GM12878 (cell line): ENCODE measurements at regions of chr4 and their contacts with region 1.

Region 1: GRCh38 chr4:76543378-76543777 is 108.3 kb downstream of the SHROOM3 start:
- DNase-seq: no peak
- ATAC-seq: no peak
- H3K4me3 ChIP-seq: no peak overlapping the region
- H3K27ac ChIP-seq: no peak overlapping the region
- H3K4me1 ChIP-seq: no peaks in the 10 kb centered on the region; the same call in 1 of the 2 replicates
- H3K27me3 ChIP-seq: peaks cover 0 to 2% of the 10 kb centered on the region in 2 experiments; a peak in 1 of 4 replicates
- CTCF ChIP-seq: no peak
- EP300 ChIP-seq: no peak
- POLR2A ChIP-seq: no peak
- RAD21 ChIP-seq: no peak

Region 2: DNA sequence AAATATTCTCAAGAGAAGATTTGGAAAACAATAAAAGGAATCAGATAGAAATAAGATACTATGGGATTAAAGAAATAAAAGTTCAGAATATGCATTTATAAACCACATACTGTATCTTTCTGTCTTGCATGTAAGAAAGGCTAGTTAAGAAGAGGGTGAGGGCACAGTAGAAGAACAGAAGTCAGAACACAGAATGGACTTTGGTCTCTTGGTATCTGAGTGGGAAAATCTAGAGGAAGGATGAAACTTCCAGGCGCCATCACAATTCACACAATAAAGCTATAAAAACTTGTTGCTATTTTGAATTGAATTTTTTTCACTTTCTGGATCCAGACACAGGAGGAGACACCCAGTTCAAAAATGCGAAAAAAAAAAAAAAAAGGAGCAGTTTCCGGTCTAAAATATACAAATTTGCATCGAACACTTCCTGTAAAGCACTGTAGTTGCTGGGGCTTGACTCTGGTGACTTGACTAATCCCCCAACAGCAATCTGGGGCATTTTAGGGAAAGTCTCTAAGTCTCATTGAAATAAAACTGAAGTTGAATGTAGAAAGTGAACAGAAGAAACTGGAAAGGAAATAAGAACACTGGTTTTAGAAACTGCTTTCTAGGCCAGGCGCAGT is 594.4 kb before region 1 on chr4:
- CTCF ChIA-PET with region 1: no interaction called
- POLR2A ChIA-PET with region 1: no interaction called
- RAD21 ChIA-PET with region 1: no interaction called
- SMC1A ChIA-PET with region 1: no interaction called
- in situ Hi-C with region 1: no loop called
- intact Hi-C with region 1: no loop called
- DNase-seq: no peak
- ATAC-seq: peak; percentile 29; the same call in 1 of the 3 replicates
- H3K4me3 ChIP-seq: no peak overlapping the region
- H3K27ac ChIP-seq: no peak overlapping the region
- H3K4me1 ChIP-seq: peaks cover 9% of the 10 kb centered on the region
- H3K27me3 ChIP-seq: no peaks in the 10 kb centered on the region
- CTCF ChIP-seq: no peak
- EP300 ChIP-seq: no peak
- POLR2A ChIP-seq: no peak
- RAD21 ChIP-seq: no peak

Region 3: DNA sequence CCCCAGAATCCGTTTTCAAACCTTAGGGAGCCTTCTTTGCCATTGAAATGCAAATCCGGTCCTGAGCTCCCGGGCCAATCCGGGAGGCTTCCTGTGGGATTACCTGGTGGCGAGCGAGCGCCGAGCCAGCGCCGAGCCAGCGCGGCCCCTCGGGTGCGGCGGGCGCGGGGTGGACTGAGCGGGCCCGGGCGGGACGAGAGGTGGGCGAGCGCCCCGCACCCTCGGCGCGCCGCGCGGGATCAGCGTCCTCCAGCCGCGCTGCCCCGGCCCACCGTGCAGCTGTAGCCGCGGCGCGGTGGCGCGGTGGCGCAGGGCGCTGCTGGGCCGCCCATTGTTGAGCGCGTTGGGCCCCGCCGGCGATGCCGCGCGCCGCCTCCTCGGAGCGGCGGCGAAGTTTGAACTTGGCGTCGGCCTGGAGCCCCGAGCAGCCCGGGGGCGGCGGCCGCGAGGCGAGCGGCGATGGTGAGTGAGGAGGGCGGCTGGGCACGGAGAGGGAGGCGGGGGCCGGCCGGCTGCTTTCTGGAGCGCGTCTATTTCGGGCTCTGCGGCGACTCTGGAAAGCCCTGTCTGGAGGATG is 146.0 kb after region 1 on chr4:
- CTCF ChIA-PET with region 1: no interaction called
- POLR2A ChIA-PET with region 1: interaction called, 10 read pairs
- RAD21 ChIA-PET with region 1: no interaction called
- SMC1A ChIA-PET with region 1: no interaction called
- in situ Hi-C with region 1: no loop called
- intact Hi-C with region 1: no loop called
- DNase-seq: no peak
- ATAC-seq: peak; percentile 61
- H3K4me3 ChIP-seq: peak overlapping the region; percentile 42; the same call in 1 of the 2 replicates
- H3K27ac ChIP-seq: no peak overlapping the region
- H3K4me1 ChIP-seq: 0 out of 2 replicates have a peak, but pooled peaks cover 3% of the 10 kb centered on the region
- H3K27me3 ChIP-seq: peaks cover 2 to 29% of the 10 kb centered on the region in 2 experiments
- CTCF ChIP-seq: no peak
- EP300 ChIP-seq: no peak
- POLR2A ChIP-seq: no peak
- RAD21 ChIP-seq: no peak